Activated CD4-positive, alpha-beta T cell treated with anti-CD3 and anti-CD28 coated beads for 36 hours (primary cell): ENCODE measurements at regions of chr19 and their contacts with region 1.

Region 1: DNA sequence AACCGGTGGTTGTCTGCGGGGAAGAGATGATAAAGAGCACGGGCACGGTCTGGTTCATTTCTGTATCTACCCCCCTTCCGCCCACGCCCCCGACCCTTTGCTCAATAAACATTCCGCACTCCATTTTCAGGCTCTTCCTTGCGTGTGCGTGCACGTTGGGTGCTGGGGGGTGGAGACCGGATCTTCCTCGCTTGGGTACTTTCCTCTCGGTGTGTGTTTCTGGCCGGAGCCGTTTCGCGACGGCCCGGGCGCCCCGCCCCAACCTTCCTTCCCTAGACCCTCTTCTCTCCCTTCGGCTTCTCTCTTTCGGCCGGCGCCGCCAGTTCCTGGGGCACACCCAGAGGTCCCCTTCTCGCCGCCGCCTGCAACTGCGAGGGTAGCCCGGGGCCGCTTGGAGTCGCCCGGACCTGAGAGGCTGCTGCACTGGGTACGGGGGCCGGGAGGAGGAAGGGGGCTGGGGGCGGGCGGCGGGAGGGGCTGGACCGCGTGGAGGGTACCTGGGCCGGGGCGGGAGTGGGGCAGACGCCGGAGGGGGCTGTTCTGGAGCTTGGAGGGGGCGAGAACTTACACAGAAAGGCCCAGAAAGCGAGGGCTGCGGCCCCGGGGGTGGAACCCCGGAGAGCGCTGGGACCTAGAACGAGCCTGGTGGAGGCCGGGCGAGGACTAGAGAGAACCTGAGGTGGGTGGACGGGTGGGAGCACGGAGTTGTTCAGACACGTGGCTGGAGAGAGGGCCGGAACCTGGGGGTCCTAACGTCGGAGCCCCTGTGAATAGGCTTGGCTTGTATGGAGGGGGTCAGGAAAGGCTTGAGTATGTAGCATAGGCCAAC is at the start of gene ZNF581:
- DNase-seq: peak; percentile 91
- ATAC-seq: peak; percentile 55
- H3K4me3 Mint-ChIP-seq: peak within 1 kb of the TSS; percentile 93
- H3K27ac Mint-ChIP-seq: peak within 1 kb of the TSS; percentile 99
- H3K4me1 Mint-ChIP-seq: peaks cover 44% of the 10 kb centered on the region
- H3K27me3 Mint-ChIP-seq: no peaks in the 10 kb centered on the region
- total RNA-seq, gene ZNF581: 18.9 to 26.9 TPM

Region 2: GRCh38 chr19:55468054-55468393 is 175.5 kb before region 1 on chr19:
- CTCF ChIA-PET with region 1: no interaction called
- POLR2A ChIA-PET with region 1: no interaction called
- intact Hi-C with region 1: no loop called
- DNase-seq: no peak
- ATAC-seq: peak; percentile 37
- H3K4me3 Mint-ChIP-seq: no peak overlapping the region
- H3K27ac Mint-ChIP-seq: no peak overlapping the region
- H3K4me1 Mint-ChIP-seq: peaks cover 3% of the 10 kb centered on the region
- H3K27me3 Mint-ChIP-seq: no peaks in the 10 kb centered on the region

Region 3: GRCh38 chr19:55580628-55581144 is 62.9 kb before region 1 on chr19 and contains the start of gene ZNF579:
- CTCF ChIA-PET with region 1: interaction called, 6 read pairs
- POLR2A ChIA-PET with region 1: no interaction called
- intact Hi-C with region 1: loop called in 1 of 2 experiments (anchors 5 kb)
- DNase-seq: peak; percentile 89
- ATAC-seq: peak; percentile 79
- H3K4me3 Mint-ChIP-seq: peak within 1 kb of the TSS; percentile 83
- H3K27ac Mint-ChIP-seq: peak within 1 kb of the TSS; percentile 78
- H3K4me1 Mint-ChIP-seq: peaks cover 23% of the 10 kb centered on the region
- H3K27me3 Mint-ChIP-seq: no peaks in the 10 kb centered on the region
- total RNA-seq, gene ZNF579: 7.2 to 7.5 TPM